HCT116 (cell line): ENCODE measurements at regions of chr10 and their contacts with region 1.

Region 1: GRCh38 chr10:92290837-92291615 is at the starts of genes CPEB3 and MARCHF5:
- DNase-seq: peak; percentile 91
- ATAC-seq: peak; percentile 97
- H3K4me3 ChIP-seq: peak within 1 kb of the TSS; percentile 94 to 97
- H3K27ac ChIP-seq: peak within 1 kb of the TSS; percentile 91
- H3K4me1 ChIP-seq: peaks cover 7 to 14% of the 10 kb centered on the region in 2 experiments
- H3K27me3 ChIP-seq: no peaks in the 10 kb centered on the region
- CTCF ChIP-seq: peak in 2 of 3 experiments; percentile 42 to 56; a peak in 4 of 6 replicates
- POLR2A ChIP-seq: no peak
- RAD21 ChIP-seq: peak; percentile 56
- total RNA-seq, gene CPEB3: 3.0 TPM
- total RNA-seq, gene MARCHF5: 59.1 TPM

Region 2: DNA sequence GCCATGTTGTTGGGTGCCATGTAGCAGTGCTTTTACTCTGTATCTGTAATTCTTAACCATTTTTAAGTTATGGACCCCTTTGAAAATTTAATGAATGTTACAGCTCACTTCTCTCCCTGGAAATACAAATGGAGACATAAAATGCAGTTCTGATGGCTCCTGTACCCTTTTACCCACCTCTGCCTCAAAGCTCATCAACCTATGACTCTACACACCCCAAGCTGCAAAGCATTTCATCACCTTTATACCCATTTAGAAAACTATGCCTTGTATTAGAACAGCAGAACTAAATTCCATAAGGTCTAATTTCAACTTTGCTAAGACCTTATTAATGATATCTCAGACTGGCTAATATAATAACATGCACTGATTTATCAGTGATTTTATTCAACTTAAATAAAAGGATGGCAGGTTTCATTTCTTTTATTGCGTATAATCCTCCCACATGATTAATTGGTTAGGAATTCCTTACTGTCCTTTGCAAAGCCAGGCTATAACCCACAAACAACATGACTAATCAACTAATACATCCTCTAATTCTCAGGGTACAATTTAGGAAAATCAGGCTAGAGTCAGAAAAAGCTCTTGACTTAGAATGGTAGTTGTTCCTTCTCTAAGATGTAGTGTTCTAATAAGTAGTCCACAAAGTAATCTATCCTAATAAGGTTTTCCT is 68.3 kb before region 1 on chr10:
- CTCF ChIA-PET with region 1: interaction called, 3 read pairs
- POLR2A ChIA-PET with region 1: interaction called, 3 read pairs
- RAD21 ChIA-PET with region 1: interaction called in 1 of 2 experiments, 3 read pairs
- intact Hi-C with region 1: loop called (anchors 1 kb)
- DNase-seq: peak; percentile 64
- ATAC-seq: peak; percentile 79
- H3K4me3 ChIP-seq: peak overlapping the region in 1 of 2 experiments; percentile 27; a peak in 2 of 4 replicates
- H3K27ac ChIP-seq: peak overlapping the region; percentile 65; the same call in 1 of the 2 replicates
- H3K4me1 ChIP-seq: peaks cover 53 to 74% of the 10 kb centered on the region in 2 experiments
- H3K27me3 ChIP-seq: no peaks in the 10 kb centered on the region
- CTCF ChIP-seq: no peak
- POLR2A ChIP-seq: no peak
- RAD21 ChIP-seq: peak; percentile 21

Region 3: DNA sequence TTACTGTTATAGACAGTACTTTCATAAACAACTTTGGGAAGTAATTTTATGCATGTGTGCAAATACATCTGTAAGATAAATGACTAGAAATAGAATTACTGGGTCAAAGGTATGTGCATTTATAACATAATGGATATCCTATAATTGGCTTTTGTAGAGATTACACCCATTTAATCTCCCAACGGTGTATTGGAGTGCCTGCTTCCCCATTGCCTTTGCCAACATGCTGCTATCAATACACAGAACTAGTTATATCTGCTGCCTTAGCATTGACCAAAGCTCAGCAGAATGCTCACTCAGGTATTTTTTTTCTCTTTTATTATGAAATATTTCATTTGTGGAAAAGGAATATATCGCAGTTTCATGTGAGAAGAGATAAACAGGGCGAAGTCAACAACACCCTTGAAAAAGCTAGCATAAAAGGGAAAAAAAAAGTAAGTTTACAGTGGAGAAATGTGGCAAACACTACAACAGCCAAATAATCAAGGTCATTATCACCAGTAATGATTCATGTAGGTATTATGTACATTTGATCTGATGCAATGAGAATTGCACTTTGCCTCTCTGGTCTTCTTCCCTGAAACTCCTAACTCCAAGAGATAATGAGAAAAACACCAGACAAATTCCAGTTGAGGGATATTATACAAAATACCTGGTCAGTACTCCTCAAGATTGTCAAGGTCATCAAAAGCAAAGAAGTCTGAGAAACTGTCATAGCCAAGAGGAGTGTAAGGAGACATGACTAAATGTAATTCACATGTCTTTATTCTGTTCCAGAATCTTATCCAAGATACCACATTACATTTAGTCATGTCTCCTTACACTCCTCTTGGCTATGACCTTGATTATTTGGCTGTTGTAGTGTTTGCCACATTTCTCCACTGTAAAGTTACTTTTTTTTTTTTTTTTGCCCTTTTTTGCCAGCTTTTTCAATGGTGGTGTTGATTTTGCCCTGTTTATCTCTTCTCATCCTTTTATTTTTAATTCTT is 36.7 kb after region 1 on chr10:
- CTCF ChIA-PET with region 1: no interaction called
- POLR2A ChIA-PET with region 1: interaction called, 3 read pairs
- RAD21 ChIA-PET with region 1: no interaction called
- intact Hi-C with region 1: loop called (anchors 5 kb)
- DNase-seq: no peak
- ATAC-seq: no peak
- H3K4me3 ChIP-seq: no peak overlapping the region
- H3K27ac ChIP-seq: no peak overlapping the region
- H3K4me1 ChIP-seq: peaks cover 21 to 39% of the 10 kb centered on the region in 2 experiments
- H3K27me3 ChIP-seq: no peaks in the 10 kb centered on the region
- CTCF ChIP-seq: no peak
- POLR2A ChIP-seq: no peak
- RAD21 ChIP-seq: no peak